ENCODE measurements at regions of chr11 and their contacts with region 1.

Region 1: GRCh38 chr11:103601225-103601846 is 435.1 kb upstream of the DDI1 start:
- DNase-seq: peak; percentile 37 to 47
- H3K4me3 ChIP-seq: no peak overlapping the region
- H3K27ac ChIP-seq: no peak overlapping the region
- H3K4me1 ChIP-seq: no peaks in the 10 kb centered on the region
- H3K27me3 ChIP-seq: no peaks in the 10 kb centered on the region
- CTCF ChIP-seq: peak; percentile 96

Region 2: GRCh38 chr11:103202048-103202651 is 399.2 kb before region 1 on chr11:
- CTCF ChIA-PET with region 1: interaction called, 7 read pairs
- POLR2A ChIA-PET with region 1: no interaction called
- intact Hi-C with region 1: loop called (anchors 1 kb)
- DNase-seq: peak in 1 of 2 experiments; percentile 18
- H3K4me3 ChIP-seq: no peak overlapping the region
- H3K27ac ChIP-seq: no peak overlapping the region
- H3K4me1 ChIP-seq: no peaks in the 10 kb centered on the region
- H3K27me3 ChIP-seq: no peaks in the 10 kb centered on the region
- CTCF ChIP-seq: peak; percentile 73

Region 3: DNA sequence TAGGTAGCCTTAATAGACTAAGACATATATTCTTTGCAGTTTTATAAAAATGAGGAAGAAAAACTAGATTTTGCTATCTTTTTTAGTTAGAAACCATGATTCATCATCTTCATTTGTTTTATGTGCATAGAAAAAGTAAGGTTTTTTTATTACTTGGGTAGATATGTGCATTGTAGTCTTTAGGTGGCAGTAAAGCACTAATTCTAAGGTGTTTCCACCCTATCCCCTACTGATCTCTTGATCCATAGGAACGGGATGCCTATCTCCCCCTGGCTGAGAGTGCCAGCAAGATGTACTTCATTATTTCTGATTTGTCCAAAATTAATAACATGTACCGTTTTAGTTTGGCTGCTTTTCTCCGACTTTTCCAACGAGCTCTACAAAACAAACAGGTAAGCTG is 344.0 kb before region 1 on chr11:
- CTCF ChIA-PET with region 1: no interaction called
- POLR2A ChIA-PET with region 1: no interaction called
- intact Hi-C with region 1: loop called (anchors 1 kb)
- DNase-seq: no peak
- H3K4me3 ChIP-seq: no peak overlapping the region
- H3K27ac ChIP-seq: no peak overlapping the region
- H3K4me1 ChIP-seq: no peaks in the 10 kb centered on the region
- H3K27me3 ChIP-seq: no peaks in the 10 kb centered on the region
- CTCF ChIP-seq: peak; percentile 72

Region 4: DNA sequence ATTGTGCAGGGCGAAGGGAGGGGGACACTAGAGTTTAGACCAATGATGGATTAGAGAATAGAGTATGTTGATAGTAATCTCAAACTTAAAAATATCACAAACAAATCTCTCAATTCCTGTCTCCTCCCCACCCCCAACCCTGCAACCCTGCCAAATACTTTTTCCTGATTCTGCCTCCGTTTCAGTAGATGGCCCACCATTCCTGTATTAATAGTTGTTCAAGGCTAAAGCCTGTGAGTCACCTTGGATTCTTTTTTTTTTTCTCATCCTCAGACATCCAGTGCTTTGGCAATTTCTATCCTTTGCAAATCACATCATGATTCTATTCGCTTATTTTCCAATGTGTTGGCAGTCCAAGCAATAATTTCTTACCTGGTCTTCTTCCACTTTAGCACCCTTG is 284.2 kb before region 1 on chr11:
- CTCF ChIA-PET with region 1: no interaction called
- POLR2A ChIA-PET with region 1: interaction called, 43 read pairs
- intact Hi-C with region 1: no loop called
- DNase-seq: no peak
- H3K4me3 ChIP-seq: no peak overlapping the region
- H3K27ac ChIP-seq: no peak overlapping the region
- H3K4me1 ChIP-seq: no peaks in the 10 kb centered on the region
- H3K27me3 ChIP-seq: no peaks in the 10 kb centered on the region
- CTCF ChIP-seq: no peak

Region 5: GRCh38 chr11:103326070-103326794 is 275.1 kb before region 1 on chr11:
- CTCF ChIA-PET with region 1: no interaction called
- POLR2A ChIA-PET with region 1: no interaction called
- intact Hi-C with region 1: loop called (anchors 1 kb)
- DNase-seq: peak; percentile 29 to 49
- H3K4me3 ChIP-seq: no peak overlapping the region
- H3K27ac ChIP-seq: no peak overlapping the region
- H3K4me1 ChIP-seq: no peaks in the 10 kb centered on the region
- H3K27me3 ChIP-seq: no peaks in the 10 kb centered on the region
- CTCF ChIP-seq: peak; percentile 85

Region 6: GRCh38 chr11:103714246-103714645 is 112.9 kb after region 1 on chr11:
- CTCF ChIA-PET with region 1: no interaction called
- POLR2A ChIA-PET with region 1: no interaction called
- intact Hi-C with region 1: no loop called
- DNase-seq: peak in 1 of 2 experiments; percentile 8
- H3K4me3 ChIP-seq: no peak overlapping the region
- H3K27ac ChIP-seq: no peak overlapping the region
- H3K4me1 ChIP-seq: no peaks in the 10 kb centered on the region
- H3K27me3 ChIP-seq: no peaks in the 10 kb centered on the region
- CTCF ChIP-seq: no peak

Measured in PC-9 (cell line).